Activated CD4-positive, alpha-beta T cell treated with anti-CD3 and anti-CD28 coated beads for 36 hours (primary cell): ENCODE measurements at regions of chr1 and their contacts with region 1.

Region 1: GRCh38 chr1:8097077-8097799 is 71.1 kb upstream of the ERRFI1 start:
- DNase-seq: peak; percentile 47
- ATAC-seq: peak; percentile 91
- H3K4me3 Mint-ChIP-seq: peak overlapping the region; percentile 59
- H3K27ac Mint-ChIP-seq: peak overlapping the region; percentile 96
- H3K4me1 Mint-ChIP-seq: peaks cover 40% of the 10 kb centered on the region
- H3K27me3 Mint-ChIP-seq: peaks cover 11% of the 10 kb centered on the region

Region 2: DNA sequence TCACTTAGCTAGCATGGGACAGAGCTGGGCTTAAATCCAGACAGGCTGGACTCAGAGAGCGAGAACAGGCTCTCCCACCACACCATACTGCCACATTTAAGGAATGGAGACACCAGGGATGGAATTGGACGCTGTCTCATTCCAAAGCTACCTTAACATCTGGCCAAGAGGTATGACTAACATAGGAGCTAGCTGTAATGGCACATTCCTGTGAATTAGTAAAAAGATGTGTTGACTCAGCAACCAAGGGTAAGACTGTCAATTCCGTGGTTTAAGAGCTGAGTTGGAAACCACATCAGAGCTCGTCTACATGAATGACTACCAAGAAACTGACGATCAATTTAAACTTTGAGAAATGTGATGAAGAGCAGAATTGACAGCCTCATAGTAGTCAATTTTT is 148.3 kb before region 1 on chr1:
- CTCF ChIA-PET with region 1: no interaction called
- POLR2A ChIA-PET with region 1: no interaction called
- intact Hi-C with region 1: loop called in 1 of 2 experiments (anchors 2 kb)
- DNase-seq: peak; percentile 50
- ATAC-seq: peak; percentile 92
- H3K4me3 Mint-ChIP-seq: peak overlapping the region; percentile 42
- H3K27ac Mint-ChIP-seq: peak overlapping the region; percentile 80
- H3K4me1 Mint-ChIP-seq: peaks cover 30% of the 10 kb centered on the region
- H3K27me3 Mint-ChIP-seq: no peaks in the 10 kb centered on the region

Region 3: GRCh38 chr1:8154621-8155052 is 57.4 kb after region 1 on chr1:
- CTCF ChIA-PET with region 1: interaction called, 3 read pairs
- POLR2A ChIA-PET with region 1: no interaction called
- intact Hi-C with region 1: loop called (anchors 1 to 2 kb)
- DNase-seq: no peak
- ATAC-seq: no peak
- H3K4me3 Mint-ChIP-seq: no peak overlapping the region
- H3K27ac Mint-ChIP-seq: no peak overlapping the region
- H3K4me1 Mint-ChIP-seq: peaks cover 46% of the 10 kb centered on the region
- H3K27me3 Mint-ChIP-seq: peaks cover 10% of the 10 kb centered on the region

Region 4: DNA sequence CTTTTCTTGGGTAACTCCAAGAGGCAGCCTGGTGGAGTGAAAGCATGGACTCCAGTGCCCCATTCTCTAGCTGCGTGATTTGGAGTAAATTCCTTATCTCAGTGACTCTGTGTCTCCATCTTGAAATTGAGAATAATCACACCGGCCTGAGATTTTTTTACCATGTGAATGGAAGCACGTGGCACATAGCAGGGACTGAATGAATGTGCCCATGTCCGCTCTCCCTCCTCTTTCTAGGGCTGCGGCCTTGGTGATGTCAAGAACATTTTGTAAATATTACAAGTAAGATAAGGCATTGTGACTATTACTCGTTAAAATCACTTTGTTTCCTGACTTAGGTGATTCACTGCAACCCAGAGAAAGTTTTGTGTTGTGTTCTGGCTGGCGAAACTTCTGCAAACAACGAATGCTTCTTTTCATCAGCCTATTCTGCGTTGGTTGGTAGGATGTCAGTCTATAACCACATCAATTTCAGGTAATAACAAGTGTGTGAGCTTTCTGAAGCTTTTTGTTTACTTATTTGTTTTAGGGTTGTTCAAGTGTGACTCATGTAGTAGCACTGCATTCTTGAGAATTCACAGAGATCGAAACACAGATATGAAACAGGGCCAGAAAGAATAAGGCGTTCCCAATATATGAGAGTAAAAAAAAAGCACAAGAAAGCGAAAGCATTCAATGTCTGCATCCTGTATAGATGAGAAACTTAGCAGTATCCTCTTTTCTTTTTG is 85.0 kb after region 1 on chr1:
- CTCF ChIA-PET with region 1: no interaction called
- POLR2A ChIA-PET with region 1: no interaction called
- intact Hi-C with region 1: loop called in 1 of 2 experiments (anchors 1 kb)
- DNase-seq: peak; percentile 41
- ATAC-seq: peak; percentile 92
- H3K4me3 Mint-ChIP-seq: peak overlapping the region; percentile 16
- H3K27ac Mint-ChIP-seq: peak overlapping the region; percentile 59
- H3K4me1 Mint-ChIP-seq: peaks cover 20% of the 10 kb centered on the region
- H3K27me3 Mint-ChIP-seq: no peaks in the 10 kb centered on the region

Region 5: DNA sequence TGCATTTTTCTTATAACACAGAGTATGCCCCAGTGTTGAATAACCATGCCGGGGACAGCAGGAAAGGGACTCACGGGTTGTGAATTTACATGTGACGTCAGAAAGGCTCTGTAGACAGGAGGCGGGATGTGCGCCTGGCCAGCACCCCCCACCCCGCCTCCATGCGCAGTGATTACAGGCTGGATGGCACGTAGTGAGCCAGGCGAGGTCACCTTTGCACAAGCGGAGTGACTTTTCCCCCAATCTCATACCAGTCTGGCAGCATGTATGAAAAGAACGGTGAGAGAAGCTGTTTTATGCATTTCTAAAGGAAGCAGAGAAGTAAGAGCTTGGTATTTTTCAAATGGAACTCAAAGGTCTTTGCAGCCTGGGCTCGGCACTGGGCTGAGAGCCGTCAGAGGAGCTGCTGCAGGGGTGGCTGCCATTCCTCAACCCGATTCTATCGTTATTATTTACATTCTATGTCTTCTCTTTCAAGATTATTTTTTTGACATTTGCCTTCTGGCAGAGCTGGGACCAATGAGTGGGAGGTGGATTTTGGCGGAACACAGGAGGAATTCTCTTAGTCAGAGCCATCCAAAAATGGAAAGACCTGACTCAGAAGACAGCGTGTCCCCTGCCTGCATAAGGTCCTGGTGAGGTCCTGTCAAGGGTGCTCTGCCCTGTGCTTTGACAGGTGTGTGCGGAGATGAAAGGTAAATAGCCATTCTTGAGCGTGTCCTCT is 105.1 kb after region 1 on chr1:
- CTCF ChIA-PET with region 1: no interaction called
- POLR2A ChIA-PET with region 1: no interaction called
- intact Hi-C with region 1: no loop called
- DNase-seq: no peak
- ATAC-seq: no peak
- H3K4me3 Mint-ChIP-seq: no peak overlapping the region
- H3K27ac Mint-ChIP-seq: no peak overlapping the region
- H3K4me1 Mint-ChIP-seq: peaks cover 6% of the 10 kb centered on the region
- H3K27me3 Mint-ChIP-seq: no peaks in the 10 kb centered on the region

Region 6: DNA sequence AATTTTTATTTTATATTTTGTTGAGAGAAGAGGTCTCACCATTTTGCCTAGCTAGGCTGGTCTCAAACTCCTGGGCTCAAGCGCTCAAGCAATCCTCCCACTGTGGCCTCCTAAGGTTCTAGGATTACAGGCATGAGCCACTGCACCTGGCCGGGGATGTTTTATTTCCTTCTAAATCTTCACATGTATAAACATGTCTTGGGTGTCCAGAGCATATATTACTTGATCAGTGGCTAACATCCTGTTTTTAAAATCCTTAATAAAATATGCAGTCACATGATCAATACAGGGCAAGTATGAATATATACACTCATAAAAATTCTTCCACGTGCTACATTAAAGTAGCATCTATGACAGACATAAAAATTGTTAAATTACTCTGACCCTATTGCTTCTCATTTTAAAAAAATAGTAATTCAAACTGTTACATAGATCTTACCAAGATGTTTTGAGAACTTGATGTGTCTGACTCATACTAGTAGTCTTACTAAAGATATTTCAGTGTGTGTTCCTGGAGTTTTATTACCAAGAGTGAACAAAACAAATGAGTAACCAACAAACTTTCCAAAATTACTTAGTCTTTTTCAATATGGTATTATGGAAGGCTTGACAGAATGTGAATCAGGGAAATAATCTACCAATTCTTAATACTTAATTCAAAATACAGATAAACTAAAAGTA is 443.2 kb after region 1 on chr1:
- CTCF ChIA-PET with region 1: no interaction called
- POLR2A ChIA-PET with region 1: no interaction called
- intact Hi-C with region 1: loop called in 1 of 2 experiments (anchors 2 kb)
- DNase-seq: no peak
- ATAC-seq: peak; percentile 84
- H3K4me3 Mint-ChIP-seq: no peak overlapping the region
- H3K27ac Mint-ChIP-seq: peak overlapping the region; percentile 80
- H3K4me1 Mint-ChIP-seq: peaks cover 32% of the 10 kb centered on the region
- H3K27me3 Mint-ChIP-seq: no peaks in the 10 kb centered on the region

Region 7: GRCh38 chr1:8660411-8660828 is 563.2 kb after region 1 on chr1:
- CTCF ChIA-PET with region 1: no interaction called
- POLR2A ChIA-PET with region 1: no interaction called
- intact Hi-C with region 1: loop called in 1 of 2 experiments (anchors 5 kb)
- DNase-seq: peak; percentile 24
- ATAC-seq: no peak
- H3K4me3 Mint-ChIP-seq: no peak overlapping the region
- H3K27ac Mint-ChIP-seq: no peak overlapping the region
- H3K4me1 Mint-ChIP-seq: peaks cover 4% of the 10 kb centered on the region
- H3K27me3 Mint-ChIP-seq: no peaks in the 10 kb centered on the region